Activated CD4-positive, alpha-beta memory T cell treated with anti-CD3 and anti-CD28 coated beads for 36 hours (primary cell): ENCODE measurements at regions of chr10 and their contacts with region 1.

Region 1: DNA sequence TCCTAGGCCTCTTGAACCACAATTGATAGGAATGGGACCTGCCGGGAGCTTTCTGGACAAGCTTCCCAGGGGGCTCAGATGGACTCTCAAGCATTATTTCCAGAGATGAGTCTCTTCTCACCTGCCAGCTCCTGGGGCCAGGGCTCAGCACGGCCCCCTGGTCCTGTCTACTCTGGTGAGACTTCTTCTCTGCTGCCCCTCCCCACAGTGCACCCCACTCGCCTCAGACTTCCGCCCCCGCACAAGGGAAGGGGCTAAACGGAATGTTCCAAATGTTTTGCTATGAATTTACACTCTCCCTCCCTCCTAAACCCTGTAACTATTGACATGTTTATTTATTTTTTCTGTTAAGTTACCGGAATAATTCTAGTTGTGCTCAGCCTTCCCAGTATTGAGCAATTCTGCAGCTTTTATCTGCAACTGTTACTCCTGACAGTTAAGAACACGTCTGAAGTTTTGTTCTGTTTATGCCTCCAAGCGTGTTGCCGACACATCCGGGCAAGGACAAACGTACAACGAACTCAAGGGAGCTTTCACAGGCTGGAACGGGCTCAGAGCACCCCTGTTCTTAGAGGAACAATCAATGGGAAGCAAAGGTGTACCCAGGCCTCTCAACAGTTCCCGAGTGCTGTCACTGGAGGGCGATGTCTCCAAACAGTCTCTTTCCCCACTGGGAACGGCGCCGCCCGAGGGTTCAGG is 55.2 kb downstream of the FHIP2A start:
- DNase-seq: peak; percentile 68
- H3K4me3 Mint-ChIP-seq: no peak overlapping the region
- H3K27ac Mint-ChIP-seq: no peak overlapping the region
- H3K4me1 Mint-ChIP-seq: peaks cover 6% of the 10 kb centered on the region
- H3K27me3 Mint-ChIP-seq: peaks cover 28% of the 10 kb centered on the region

Region 2: GRCh38 chr10:114550756-114551635 is 325.8 kb before region 1 on chr10:
- CTCF ChIA-PET with region 1: interaction called, 3 read pairs
- POLR2A ChIA-PET with region 1: no interaction called
- intact Hi-C with region 1: loop called (anchors 1 kb)
- DNase-seq: no peak
- H3K4me3 Mint-ChIP-seq: no peak overlapping the region
- H3K27ac Mint-ChIP-seq: peak overlapping the region; percentile 15
- H3K4me1 Mint-ChIP-seq: peaks cover 16% of the 10 kb centered on the region
- H3K27me3 Mint-ChIP-seq: no peaks in the 10 kb centered on the region

Region 3: DNA sequence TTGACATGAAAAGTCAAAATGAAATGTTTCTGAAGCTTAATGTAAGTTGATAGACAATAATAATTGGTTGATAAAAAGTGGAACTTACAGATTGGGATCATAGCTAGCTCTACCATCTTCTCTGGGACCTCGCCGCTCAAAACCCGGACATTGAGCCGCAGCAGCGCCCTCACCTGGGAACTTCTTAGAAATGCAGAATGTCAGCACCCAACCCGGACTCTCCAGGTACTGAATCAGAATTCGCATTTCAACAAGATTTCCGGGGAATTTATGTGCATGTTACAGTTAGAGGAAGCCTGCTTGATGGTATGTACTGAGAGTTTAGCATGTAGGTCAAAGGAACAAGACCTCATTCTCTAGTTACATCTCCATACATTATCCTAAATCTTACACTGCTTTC is 182.0 kb before region 1 on chr10:
- CTCF ChIA-PET with region 1: no interaction called
- POLR2A ChIA-PET with region 1: no interaction called
- intact Hi-C with region 1: loop called (anchors 10 kb)
- DNase-seq: peak; percentile 63
- H3K4me3 Mint-ChIP-seq: no peak overlapping the region
- H3K27ac Mint-ChIP-seq: no peak overlapping the region
- H3K4me1 Mint-ChIP-seq: peaks cover 5% of the 10 kb centered on the region
- H3K27me3 Mint-ChIP-seq: peaks cover 4% of the 10 kb centered on the region

Region 4: GRCh38 chr10:114714281-114714741 is 162.4 kb before region 1 on chr10:
- CTCF ChIA-PET with region 1: no interaction called
- POLR2A ChIA-PET with region 1: no interaction called
- intact Hi-C with region 1: no loop called
- DNase-seq: no peak
- H3K4me3 Mint-ChIP-seq: no peak overlapping the region
- H3K27ac Mint-ChIP-seq: no peak overlapping the region
- H3K4me1 Mint-ChIP-seq: no peaks in the 10 kb centered on the region
- H3K27me3 Mint-ChIP-seq: peaks cover 7% of the 10 kb centered on the region

Region 5: DNA sequence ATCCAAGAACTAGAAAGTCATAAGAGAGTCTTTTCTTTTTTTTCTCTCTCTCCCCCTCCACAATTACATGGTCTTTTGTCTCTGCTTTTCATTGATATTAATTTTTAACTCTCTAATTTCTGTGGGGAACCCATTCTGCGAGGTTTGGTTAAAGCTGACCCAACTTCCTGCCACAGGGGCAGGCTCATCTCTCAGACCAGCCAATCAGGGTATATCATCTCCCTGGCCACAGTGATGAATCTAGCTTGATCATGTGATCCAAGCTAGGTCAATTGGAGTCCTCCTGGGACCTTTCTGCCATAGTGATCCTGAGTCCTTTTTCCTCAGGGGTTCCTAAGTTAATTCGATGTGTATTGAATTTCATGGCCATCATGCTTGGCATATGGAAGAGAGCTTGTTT is 23.2 kb after region 1 on chr10:
- CTCF ChIA-PET with region 1: interaction called, 13 read pairs
- POLR2A ChIA-PET with region 1: no interaction called
- intact Hi-C with region 1: no loop called
- DNase-seq: no peak
- H3K4me3 Mint-ChIP-seq: no peak overlapping the region
- H3K27ac Mint-ChIP-seq: no peak overlapping the region
- H3K4me1 Mint-ChIP-seq: no peaks in the 10 kb centered on the region
- H3K27me3 Mint-ChIP-seq: no peaks in the 10 kb centered on the region

Region 6: DNA sequence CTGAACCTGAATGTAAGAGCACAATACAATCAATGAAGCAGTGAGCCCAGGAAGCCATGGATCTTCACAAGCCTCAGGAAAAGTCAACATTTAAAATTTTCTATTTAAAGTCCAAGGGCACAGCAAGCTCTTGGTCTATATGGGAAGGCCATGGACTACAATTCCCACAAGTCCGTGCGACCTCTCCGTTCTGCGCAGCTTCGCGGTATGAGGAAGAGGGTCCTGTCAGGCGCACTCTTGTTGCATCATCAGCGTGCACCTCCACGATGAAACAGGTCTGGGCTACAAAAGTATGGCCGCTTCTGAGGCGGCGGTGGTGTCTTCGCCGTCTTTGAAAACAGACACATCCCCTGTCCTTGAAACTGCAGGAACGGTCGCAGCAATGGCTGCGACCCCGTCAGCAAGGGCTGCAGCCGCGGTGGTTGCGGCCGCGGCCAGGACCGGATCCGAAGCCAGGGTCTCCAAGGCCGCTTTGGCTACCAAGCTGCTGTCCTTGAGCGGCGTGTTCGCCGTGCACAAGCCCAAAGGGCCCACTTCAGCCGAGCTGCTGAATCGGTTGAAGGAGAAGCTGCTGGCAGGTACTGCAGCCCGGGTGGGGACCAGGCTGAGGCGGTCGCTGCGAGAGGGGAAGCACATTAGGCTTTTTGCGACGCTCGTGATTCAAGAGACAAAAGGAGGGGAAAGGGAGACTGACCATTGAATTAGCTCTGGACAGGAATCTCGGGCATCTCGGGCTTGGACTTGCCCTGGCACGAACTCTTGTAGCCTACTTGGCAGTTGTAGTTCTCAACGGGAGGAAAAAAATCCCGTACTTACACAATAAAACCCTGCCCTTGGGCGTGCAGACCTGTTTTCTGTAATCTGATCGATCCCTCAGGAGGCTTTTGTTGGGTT is 61.5 kb after region 1 on chr10 and contains the start of gene TRUB1:
- CTCF ChIA-PET with region 1: interaction called, 10 read pairs
- POLR2A ChIA-PET with region 1: no interaction called
- intact Hi-C with region 1: no loop called
- DNase-seq: peak; percentile 94
- H3K4me3 Mint-ChIP-seq: peak within 1 kb of the TSS; percentile 96
- H3K27ac Mint-ChIP-seq: peak within 1 kb of the TSS; percentile 80
- H3K4me1 Mint-ChIP-seq: peaks cover 28% of the 10 kb centered on the region
- H3K27me3 Mint-ChIP-seq: no peaks in the 10 kb centered on the region
- total RNA-seq, gene TRUB1: 13.4 to 16.2 TPM

Region 7: DNA sequence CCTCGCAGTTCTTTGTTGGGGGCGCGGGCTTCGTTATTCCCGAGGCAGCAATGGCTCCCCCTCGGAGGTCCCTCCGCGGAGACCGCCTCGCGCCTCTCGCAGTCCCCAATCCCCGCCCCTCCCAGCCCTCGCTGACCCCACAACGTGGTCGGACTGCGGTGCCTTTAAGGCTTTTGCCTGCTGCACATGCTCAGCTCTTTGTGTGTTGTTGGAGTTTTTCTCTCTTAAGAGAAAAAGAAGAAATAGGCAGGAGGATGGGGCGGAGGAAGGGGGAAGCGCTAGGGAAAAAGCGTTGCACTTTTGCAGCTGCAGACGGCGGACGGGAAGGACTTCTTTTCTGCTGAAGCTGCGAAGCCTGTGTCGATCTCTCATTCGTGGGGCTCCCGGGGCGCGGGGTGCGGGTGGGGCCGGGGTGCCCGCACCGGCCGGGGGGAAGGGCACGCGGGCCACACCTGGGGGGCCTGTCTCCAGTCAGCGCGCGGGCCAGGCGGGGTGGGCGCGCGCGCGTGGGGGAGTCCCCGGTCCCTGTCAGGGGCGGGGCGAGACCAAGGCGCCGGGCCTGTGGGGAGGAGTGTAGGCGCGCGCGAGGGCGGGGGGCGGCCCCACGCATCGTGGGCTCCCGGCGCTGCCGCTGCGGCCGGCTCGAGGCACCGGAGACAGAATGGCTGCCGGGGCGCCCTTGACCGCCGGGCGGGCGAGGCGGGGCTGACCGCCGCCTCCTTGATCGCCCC is 216.0 kb after region 1 on chr10:
- CTCF ChIA-PET with region 1: interaction called, 3 read pairs
- POLR2A ChIA-PET with region 1: no interaction called
- intact Hi-C with region 1: loop called (anchors 10 kb)
- DNase-seq: peak; percentile 22
- H3K4me3 Mint-ChIP-seq: peak overlapping the region; percentile 69
- H3K27ac Mint-ChIP-seq: no peak overlapping the region
- H3K4me1 Mint-ChIP-seq: peaks cover 10% of the 10 kb centered on the region
- H3K27me3 Mint-ChIP-seq: peaks cover 38% of the 10 kb centered on the region

Region 8: GRCh38 chr10:115129752-115130151 is 253.0 kb after region 1 on chr10:
- CTCF ChIA-PET with region 1: interaction called, 55 read pairs
- POLR2A ChIA-PET with region 1: no interaction called
- intact Hi-C with region 1: loop called (anchors 1 kb)
- DNase-seq: no peak
- H3K4me3 Mint-ChIP-seq: no peak overlapping the region
- H3K27ac Mint-ChIP-seq: no peak overlapping the region
- H3K4me1 Mint-ChIP-seq: no peaks in the 10 kb centered on the region
- H3K27me3 Mint-ChIP-seq: peaks cover 9% of the 10 kb centered on the region